Activated B cell treated with CpG ODN at 0.5 μM for 24 hours (primary cell): ENCODE measurements at regions of chr11 and their contacts with region 1.

Region 1: GRCh38 chr11:126211235-126212088 is at the starts of genes FAM118B and RPUSD4:
- DNase-seq: peak; percentile 99
- ATAC-seq: peak; percentile 93
- H3K4me3 Mint-ChIP-seq: peak within 1 kb of the TSS; percentile 99
- H3K27ac Mint-ChIP-seq: peak within 1 kb of the TSS; percentile 97
- H3K4me1 Mint-ChIP-seq: peaks cover 28% of the 10 kb centered on the region
- H3K27me3 Mint-ChIP-seq: no peaks in the 10 kb centered on the region
- CTCF ChIP-seq: no peak
- total RNA-seq, gene FAM118B: 8.7 and 11.7 TPM in 2 replicates
- total RNA-seq, gene RPUSD4: 48.8 and 58.2 TPM in 2 replicates

Region 2: GRCh38 chr11:125404776-125405435 is 806.6 kb before region 1 on chr11:
- CTCF ChIA-PET with region 1: no interaction called
- POLR2A ChIA-PET with region 1: interaction called, 13 read pairs
- intact Hi-C with region 1: no loop called
- DNase-seq: peak; percentile 60
- ATAC-seq: peak; percentile 98
- H3K4me3 Mint-ChIP-seq: no peak overlapping the region
- H3K27ac Mint-ChIP-seq: no peak overlapping the region
- H3K4me1 Mint-ChIP-seq: peaks cover 4% of the 10 kb centered on the region
- H3K27me3 Mint-ChIP-seq: peaks cover 60% of the 10 kb centered on the region
- CTCF ChIP-seq: peak; percentile 66

Region 3: GRCh38 chr11:125625630-125626287 is 585.7 kb before region 1 on chr11:
- CTCF ChIA-PET with region 1: no interaction called
- POLR2A ChIA-PET with region 1: no interaction called
- intact Hi-C with region 1: loop called (anchors 10 kb)
- DNase-seq: peak; percentile 80
- ATAC-seq: peak; percentile 93
- H3K4me3 Mint-ChIP-seq: peak overlapping the region; percentile 91
- H3K27ac Mint-ChIP-seq: peak overlapping the region; percentile 98
- H3K4me1 Mint-ChIP-seq: peaks cover 20% of the 10 kb centered on the region
- H3K27me3 Mint-ChIP-seq: no peaks in the 10 kb centered on the region
- CTCF ChIP-seq: no peak

Region 4: GRCh38 chr11:126062679-126063506 is 148.6 kb before region 1 on chr11 and contains the start of gene CDON:
- CTCF ChIA-PET with region 1: no interaction called
- POLR2A ChIA-PET with region 1: no interaction called
- intact Hi-C with region 1: loop called (anchors 1 kb)
- DNase-seq: peak; percentile 72
- ATAC-seq: peak; percentile 90
- H3K4me3 Mint-ChIP-seq: peak within 1 kb of the TSS; percentile 81
- H3K27ac Mint-ChIP-seq: no peak within 1 kb of the TSS
- H3K4me1 Mint-ChIP-seq: peaks cover 6% of the 10 kb centered on the region
- H3K27me3 Mint-ChIP-seq: peaks cover 38% of the 10 kb centered on the region
- CTCF ChIP-seq: no peak
- total RNA-seq, gene CDON: 0.24 and 0.27 TPM in 2 replicates

Region 5: GRCh38 chr11:126231725-126232459 is 20.4 kb after region 1 on chr11:
- CTCF ChIA-PET with region 1: no interaction called
- POLR2A ChIA-PET with region 1: no interaction called
- intact Hi-C with region 1: no loop called
- DNase-seq: no peak
- ATAC-seq: no peak
- H3K4me3 Mint-ChIP-seq: no peak overlapping the region
- H3K27ac Mint-ChIP-seq: no peak overlapping the region
- H3K4me1 Mint-ChIP-seq: no peaks in the 10 kb centered on the region
- H3K27me3 Mint-ChIP-seq: no peaks in the 10 kb centered on the region
- CTCF ChIP-seq: no peak

Region 6: GRCh38 chr11:126282736-126283591 is 71.5 kb after region 1 on chr11 and contains the start of gene TIRAP:
- CTCF ChIA-PET with region 1: no interaction called
- POLR2A ChIA-PET with region 1: interaction called, 4 read pairs
- intact Hi-C with region 1: loop called (anchors 1 kb)
- DNase-seq: peak; percentile 68
- ATAC-seq: peak; percentile 79
- H3K4me3 Mint-ChIP-seq: peak within 1 kb of the TSS; percentile 95
- H3K27ac Mint-ChIP-seq: peak within 1 kb of the TSS; percentile 93
- H3K4me1 Mint-ChIP-seq: peaks cover 40% of the 10 kb centered on the region
- H3K27me3 Mint-ChIP-seq: no peaks in the 10 kb centered on the region
- CTCF ChIP-seq: no peak
- total RNA-seq, gene TIRAP: 16.6 and 18.3 TPM in 2 replicates